Mammary epithelial cell (primary cell): ENCODE measurements at regions of chr3 and their contacts with region 1.

Region 1: DNA sequence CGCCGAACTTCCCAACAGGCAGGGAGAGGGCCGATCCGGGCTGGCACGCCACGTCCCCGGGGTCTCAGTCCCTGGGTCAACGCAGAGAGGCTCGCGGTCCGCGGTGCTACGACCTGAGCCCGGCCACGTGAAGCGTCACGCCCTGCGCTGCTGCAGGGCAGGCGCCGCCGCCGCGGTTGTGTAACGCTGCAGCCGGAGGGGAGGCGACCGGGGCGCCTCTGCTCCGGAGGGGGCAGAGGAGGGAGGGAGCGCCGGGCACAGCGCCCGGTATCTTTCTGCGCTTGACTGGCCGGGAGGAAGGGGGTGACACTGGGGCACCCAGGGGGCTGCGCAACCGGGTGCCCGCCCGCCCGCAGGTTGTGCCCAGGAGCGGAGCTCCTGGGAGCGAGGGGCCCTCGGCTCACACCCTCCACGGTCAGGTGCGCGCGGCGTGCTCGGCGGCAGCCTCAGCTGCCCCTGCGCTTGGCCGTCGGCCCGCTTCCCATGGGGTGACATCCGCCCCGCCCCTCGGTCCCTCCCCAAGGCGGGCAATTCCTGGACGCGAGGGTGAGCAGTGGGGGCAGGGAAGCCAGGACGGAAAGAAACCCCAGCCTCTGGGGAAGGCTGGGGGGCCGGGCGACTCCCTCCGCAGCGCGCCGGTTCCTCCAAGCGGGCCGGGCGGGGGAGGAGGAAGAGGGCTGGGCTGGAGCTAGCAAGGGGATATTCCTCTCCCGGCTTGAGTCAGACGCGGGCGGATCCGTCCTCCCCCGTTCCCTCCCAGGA is 852 bp upstream of the BHLHE40 start:
- DNase-seq: peak; percentile 100
- H3K4me3 ChIP-seq: peak overlapping the region; percentile 37 to 61 (median 53)
- H3K27ac ChIP-seq: peak overlapping the region; percentile 96
- H3K4me1 ChIP-seq: peaks cover 26% of the 10 kb centered on the region
- H3K27me3 ChIP-seq: no peaks in the 10 kb centered on the region
- CTCF ChIP-seq: no peak

Region 2: DNA sequence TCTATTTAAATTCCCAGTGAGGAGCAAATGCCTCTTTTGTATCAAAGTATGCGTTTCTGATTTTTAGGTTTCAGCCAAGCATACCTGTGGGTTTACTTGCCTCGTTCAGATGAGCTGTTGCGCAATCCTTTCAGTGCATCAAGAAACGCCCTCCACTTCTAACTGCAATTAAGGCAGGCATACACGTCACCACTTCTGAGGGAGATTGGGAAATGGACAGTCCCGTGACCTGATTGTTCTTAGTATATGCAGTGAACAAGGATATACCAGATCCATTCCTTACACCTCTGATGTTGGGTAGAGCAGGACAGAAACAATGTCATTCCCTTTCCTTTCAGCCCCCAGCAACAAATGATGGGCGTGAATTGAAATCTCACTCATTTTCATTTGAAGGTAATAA is 266.2 kb before region 1 on chr3:
- CTCF ChIA-PET with region 1: interaction called, 18 read pairs
- dilution Hi-C with region 1: no loop called
- in situ Hi-C with region 1: no loop called
- intact Hi-C with region 1: loop called (anchors 1 kb)
- DNase-seq: peak; percentile 99
- H3K4me3 ChIP-seq: no peak overlapping the region
- H3K27ac ChIP-seq: peak overlapping the region; percentile 96
- H3K4me1 ChIP-seq: peaks cover 22% of the 10 kb centered on the region
- H3K27me3 ChIP-seq: no peaks in the 10 kb centered on the region
- CTCF ChIP-seq: no peak

Region 3: GRCh38 chr3:4831580-4831950 is 146.8 kb before region 1 on chr3:
- CTCF ChIA-PET with region 1: interaction called, 4 read pairs
- dilution Hi-C with region 1: no loop called
- in situ Hi-C with region 1: no loop called
- intact Hi-C with region 1: loop called (anchors 2 kb)
- DNase-seq: no peak
- H3K4me3 ChIP-seq: no peak overlapping the region
- H3K27ac ChIP-seq: peak overlapping the region; percentile 70
- H3K4me1 ChIP-seq: peaks cover 40% of the 10 kb centered on the region
- H3K27me3 ChIP-seq: no peaks in the 10 kb centered on the region
- CTCF ChIP-seq: no peak

Region 4: DNA sequence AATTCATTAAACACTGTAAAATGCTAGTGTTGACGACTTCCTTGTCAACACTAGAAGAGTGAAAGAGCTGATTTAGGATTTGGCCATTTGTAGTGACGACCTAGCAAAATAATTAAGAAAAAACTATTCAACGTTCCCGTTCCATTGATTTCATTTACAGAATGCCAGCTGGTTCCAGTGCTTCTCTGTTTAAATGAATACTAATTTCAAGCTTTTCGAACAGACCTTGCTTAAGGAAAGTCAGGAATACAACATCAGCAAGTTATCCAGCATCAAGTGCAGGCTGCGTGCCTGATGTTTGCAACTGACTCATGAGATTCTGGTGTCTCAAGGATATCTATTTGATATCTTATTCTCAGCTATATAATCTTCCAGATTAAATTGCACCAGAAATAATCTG is 97.5 kb before region 1 on chr3:
- CTCF ChIA-PET with region 1: no interaction called
- dilution Hi-C with region 1: no loop called
- in situ Hi-C with region 1: no loop called
- intact Hi-C with region 1: no loop called
- DNase-seq: no peak
- H3K4me3 ChIP-seq: no peak overlapping the region
- H3K27ac ChIP-seq: no peak overlapping the region
- H3K4me1 ChIP-seq: no peaks in the 10 kb centered on the region
- H3K27me3 ChIP-seq: no peaks in the 10 kb centered on the region
- CTCF ChIP-seq: no peak

Region 5: DNA sequence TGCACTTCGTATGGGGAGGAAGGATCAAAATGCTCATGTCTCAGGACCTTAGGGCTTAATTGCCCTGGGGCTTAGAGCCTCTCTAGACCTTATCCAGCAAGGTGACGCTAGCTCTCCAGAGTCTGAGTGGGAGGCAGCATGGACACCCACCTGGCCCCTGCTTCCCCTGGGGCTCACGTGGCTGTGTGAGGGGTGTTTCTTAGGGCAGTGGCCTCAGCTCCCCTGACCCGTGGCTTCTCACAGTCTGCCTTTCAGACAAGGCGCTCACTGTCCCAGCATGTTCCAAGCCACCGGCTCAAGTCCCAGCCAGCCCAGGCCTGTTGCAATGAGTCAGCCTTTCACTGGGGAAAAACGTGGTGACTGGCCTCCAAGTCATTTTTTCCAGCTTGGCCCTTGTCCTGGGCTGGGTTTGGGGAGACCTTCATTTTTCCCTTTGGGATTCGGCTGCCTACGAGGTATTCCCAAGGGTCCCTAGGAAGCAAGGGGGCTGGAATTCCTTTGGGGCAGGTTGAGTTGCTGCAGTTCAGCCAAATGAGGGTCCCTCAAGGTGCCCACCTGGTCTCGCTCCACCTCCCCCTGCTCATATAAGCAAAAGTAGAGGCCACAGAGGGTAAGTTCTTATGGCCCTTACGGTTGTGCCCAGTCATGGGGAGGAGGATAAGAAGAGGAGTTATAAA is 16.6 kb after region 1 on chr3:
- CTCF ChIA-PET with region 1: interaction called, 11 read pairs
- dilution Hi-C with region 1: no loop called
- in situ Hi-C with region 1: no loop called
- intact Hi-C with region 1: no loop called
- DNase-seq: peak; percentile 99
- H3K4me3 ChIP-seq: no peak overlapping the region
- H3K27ac ChIP-seq: peak overlapping the region; percentile 98
- H3K4me1 ChIP-seq: peaks cover 42% of the 10 kb centered on the region
- H3K27me3 ChIP-seq: no peaks in the 10 kb centered on the region
- CTCF ChIP-seq: no peak

Region 6: DNA sequence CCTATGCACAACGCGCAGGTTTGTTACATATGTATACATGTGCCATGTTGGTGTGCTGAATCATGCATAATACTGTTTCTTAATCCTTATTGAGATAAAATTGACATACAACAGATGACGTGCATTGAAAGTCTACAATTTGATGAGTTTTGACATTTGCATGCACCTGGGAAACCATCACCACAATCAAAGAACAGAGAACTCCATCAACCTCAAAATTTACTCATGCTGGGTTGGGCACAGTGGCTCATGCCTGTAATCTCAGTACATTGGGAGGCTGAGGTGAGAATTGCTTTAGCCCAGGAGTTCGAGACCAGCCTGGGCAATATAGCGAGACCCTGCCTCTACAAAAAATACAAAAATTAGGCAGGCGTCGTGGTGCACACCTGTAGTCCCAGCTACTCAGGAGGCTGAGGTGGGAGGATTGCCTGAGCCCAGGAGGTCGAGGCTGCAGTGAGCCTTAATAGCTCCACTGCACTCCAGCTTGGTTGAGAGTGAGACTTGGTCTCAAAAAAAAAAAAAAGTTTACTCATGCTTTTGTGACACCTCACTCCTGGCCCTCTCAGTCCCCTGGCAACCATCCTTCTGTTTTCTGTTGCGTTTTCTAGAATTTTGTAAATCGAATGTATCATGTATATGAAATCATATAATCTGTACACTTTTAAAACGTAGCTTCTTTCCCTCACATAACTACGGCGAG is 57.5 kb after region 1 on chr3:
- CTCF ChIA-PET with region 1: interaction called, 16 read pairs
- dilution Hi-C with region 1: no loop called
- in situ Hi-C with region 1: no loop called
- intact Hi-C with region 1: no loop called
- DNase-seq: no peak
- H3K4me3 ChIP-seq: no peak overlapping the region
- H3K27ac ChIP-seq: no peak overlapping the region
- H3K4me1 ChIP-seq: no peaks in the 10 kb centered on the region
- H3K27me3 ChIP-seq: no peaks in the 10 kb centered on the region
- CTCF ChIP-seq: no peak

Region 7: GRCh38 chr3:5122030-5122740 is 143.8 kb after region 1 on chr3 and contains the start of gene ARL8B:
- CTCF ChIA-PET with region 1: no interaction called
- dilution Hi-C with region 1: no loop called
- in situ Hi-C with region 1: no loop called
- intact Hi-C with region 1: loop called (anchors 2 kb)
- DNase-seq: peak; percentile 85
- H3K4me3 ChIP-seq: peak within 1 kb of the TSS; percentile 76 to 93 (median 93)
- H3K27ac ChIP-seq: peak within 1 kb of the TSS; percentile 89
- H3K4me1 ChIP-seq: peaks cover 23% of the 10 kb centered on the region
- H3K27me3 ChIP-seq: no peaks in the 10 kb centered on the region
- CTCF ChIP-seq: peak; percentile 94 to 95
- total RNA-seq, gene ARL8B: 60.7 to 77.8 TPM

Region 8: GRCh38 chr3:5194341-5195159 is 216.2 kb after region 1 on chr3:
- CTCF ChIA-PET with region 1: no interaction called
- dilution Hi-C with region 1: no loop called
- in situ Hi-C with region 1: loop called in 1 of 2 experiments (anchors 25 kb)
- intact Hi-C with region 1: loop called (anchors 5 kb)
- DNase-seq: peak; percentile 90
- H3K4me3 ChIP-seq: peak overlapping the region in 1 of 3 experiments; percentile 3
- H3K27ac ChIP-seq: peak overlapping the region; percentile 95
- H3K4me1 ChIP-seq: peaks cover 69% of the 10 kb centered on the region
- H3K27me3 ChIP-seq: no peaks in the 10 kb centered on the region
- CTCF ChIP-seq: no peak